Naive thymus-derived CD4-positive, alpha-beta T cell (primary cell): ENCODE measurements at regions of chr20 and their contacts with region 1.

Region 1: DNA sequence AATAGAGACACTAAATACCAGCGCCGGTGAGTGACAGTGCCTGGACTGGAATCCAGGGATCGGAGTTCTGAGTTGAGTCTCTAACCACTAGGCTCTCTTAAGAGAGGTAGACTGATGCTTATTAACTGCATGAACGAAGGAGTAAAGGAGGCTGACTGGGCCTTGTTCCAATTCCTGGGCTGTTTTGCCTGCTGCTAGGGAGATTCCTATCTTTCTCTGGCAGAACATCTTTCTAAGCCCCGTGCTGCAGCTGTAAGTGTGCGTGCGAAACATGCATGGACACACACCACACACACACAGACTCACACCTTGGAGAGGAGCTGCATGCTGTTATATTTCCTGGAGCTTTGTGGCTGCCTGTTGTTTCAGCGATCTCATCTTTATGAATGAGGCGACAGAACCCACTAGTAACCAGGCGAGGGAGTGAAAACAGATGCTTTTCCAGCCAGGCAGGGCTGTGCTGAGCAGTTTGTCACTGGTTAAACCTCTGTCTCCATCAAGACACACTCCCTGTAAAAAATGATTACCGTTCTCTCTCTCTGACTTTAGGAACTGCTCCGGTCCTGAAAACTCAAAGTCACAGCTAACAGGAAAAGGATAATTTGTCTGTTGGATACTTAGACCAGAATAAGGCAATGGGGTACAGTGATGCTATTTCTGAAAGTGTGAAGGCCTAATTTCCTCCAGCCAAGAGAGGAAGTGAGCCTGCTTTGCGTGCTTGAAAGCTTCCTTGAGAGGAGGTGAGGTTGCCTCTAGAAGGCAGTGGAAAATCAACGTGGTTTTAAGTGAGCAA is 157.4 kb upstream of the ZNF217 start:
- DNase-seq: peak in 8 of 9 donors; percentile 21 to 60 (median 40)
- ATAC-seq: peak; percentile 61
- H3K4me3 ChIP-seq: no peak overlapping the region
- H3K4me3 Mint-ChIP-seq: peak overlapping the region; percentile 51 to 84 (median 68)
- H3K27ac ChIP-seq: peak overlapping the region; percentile 63
- H3K27ac Mint-ChIP-seq: peak overlapping the region; percentile 91 to 99 (median 96)
- H3K4me1 ChIP-seq: peaks cover 53 to 66% of the 10 kb centered on the region in 2 donors
- H3K4me1 Mint-ChIP-seq: peaks cover 45 to 77% (median 72%) of the 10 kb centered on the region in 7 donors
- H3K27me3 ChIP-seq: no peaks in the 10 kb centered on the region
- H3K27me3 Mint-ChIP-seq: no peaks in the 10 kb centered on the region

Region 2: DNA sequence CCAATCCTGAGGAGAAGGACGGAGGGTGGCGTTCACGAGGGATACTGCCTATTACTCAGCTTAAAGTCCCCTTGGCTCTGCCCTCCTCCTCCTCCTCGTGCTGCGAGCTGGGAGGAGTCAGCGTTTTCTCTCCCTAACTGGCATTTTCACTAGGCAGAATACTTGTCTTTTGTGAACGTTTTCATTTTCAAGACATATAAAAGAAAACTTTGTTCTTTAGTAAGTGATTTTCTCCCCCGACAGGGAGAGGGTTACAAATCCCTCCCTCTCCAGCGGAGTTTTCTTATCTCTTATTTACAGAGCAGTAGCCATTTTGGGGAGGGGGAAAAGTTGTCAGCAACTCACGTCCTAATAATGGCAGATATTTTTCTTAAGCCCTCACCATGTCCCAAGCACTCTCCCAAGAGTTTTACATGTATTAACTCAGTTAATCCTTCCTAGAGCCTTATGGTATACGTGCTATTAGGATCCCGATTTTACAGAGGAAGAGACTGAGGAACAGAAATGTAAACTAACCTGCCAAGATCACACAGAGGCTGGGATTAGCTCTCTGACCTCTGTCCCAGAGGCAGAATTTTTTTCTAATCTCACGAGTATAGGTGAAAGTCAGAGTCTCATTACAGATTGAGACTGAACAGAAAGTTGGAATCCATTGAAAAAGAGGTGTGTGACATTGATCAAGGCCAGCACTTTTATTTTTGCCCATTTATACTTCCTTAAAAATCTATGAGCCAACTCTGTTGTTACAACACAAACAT is 127.4 kb before region 1 on chr20:
- CTCF ChIA-PET with region 1: no interaction called
- POLR2A ChIA-PET with region 1: interaction called, 3 read pairs
- intact Hi-C with region 1: loop called in 1 of 2 experiments (anchors 1 kb)
- DNase-seq: peak in 4 of 9 donors; percentile 28 to 44 (median 31)
- ATAC-seq: peak; percentile 83
- H3K4me3 ChIP-seq: peak overlapping the region; percentile 56
- H3K4me3 Mint-ChIP-seq: peak overlapping the region; percentile 78 to 92 (median 87)
- H3K27ac ChIP-seq: peak overlapping the region; percentile 74
- H3K27ac Mint-ChIP-seq: peak overlapping the region; percentile 91 to 98 (median 97)
- H3K4me1 ChIP-seq: peaks cover 31 to 32% of the 10 kb centered on the region in 2 donors
- H3K4me1 Mint-ChIP-seq: peaks cover 17 to 53% (median 44%) of the 10 kb centered on the region in 7 donors
- H3K27me3 ChIP-seq: no peaks in the 10 kb centered on the region
- H3K27me3 Mint-ChIP-seq: no peaks in the 10 kb centered on the region

Region 3: GRCh38 chr20:53652090-53652858 is 98.7 kb before region 1 on chr20:
- CTCF ChIA-PET with region 1: no interaction called
- POLR2A ChIA-PET with region 1: no interaction called
- intact Hi-C with region 1: no loop called
- DNase-seq: peak in 7 of 9 donors; percentile 34 to 61 (median 46)
- ATAC-seq: peak; percentile 85
- H3K4me3 ChIP-seq: peak overlapping the region; percentile 22
- H3K4me3 Mint-ChIP-seq: peak overlapping the region; percentile 25 to 86 (median 73)
- H3K27ac ChIP-seq: peak overlapping the region; percentile 72
- H3K27ac Mint-ChIP-seq: peak overlapping the region; percentile 88 to 97 (median 95)
- H3K4me1 ChIP-seq: peaks cover 21 to 32% of the 10 kb centered on the region in 2 donors
- H3K4me1 Mint-ChIP-seq: peaks cover 23 to 50% (median 43%) of the 10 kb centered on the region in 7 donors
- H3K27me3 ChIP-seq: no peaks in the 10 kb centered on the region
- H3K27me3 Mint-ChIP-seq: no peaks in the 10 kb centered on the region

Region 4: GRCh38 chr20:53692413-53693067 is 58.5 kb before region 1 on chr20:
- CTCF ChIA-PET with region 1: no interaction called
- POLR2A ChIA-PET with region 1: no interaction called
- intact Hi-C with region 1: loop called in 1 of 2 experiments (anchors 1 kb)
- DNase-seq: no peak
- ATAC-seq: peak; percentile 61
- H3K4me3 ChIP-seq: no peak overlapping the region
- H3K4me3 Mint-ChIP-seq: peak overlapping the region; percentile 42 to 80 (median 72)
- H3K27ac ChIP-seq: no peak overlapping the region
- H3K27ac Mint-ChIP-seq: peak overlapping the region; percentile 38 to 92 (median 69)
- H3K4me1 ChIP-seq: peaks cover 8 to 10% of the 10 kb centered on the region in 2 donors
- H3K4me1 Mint-ChIP-seq: peaks cover 8 to 45% (median 30%) of the 10 kb centered on the region in 7 donors
- H3K27me3 ChIP-seq: no peaks in the 10 kb centered on the region
- H3K27me3 Mint-ChIP-seq: no peaks in the 10 kb centered on the region

Region 5: DNA sequence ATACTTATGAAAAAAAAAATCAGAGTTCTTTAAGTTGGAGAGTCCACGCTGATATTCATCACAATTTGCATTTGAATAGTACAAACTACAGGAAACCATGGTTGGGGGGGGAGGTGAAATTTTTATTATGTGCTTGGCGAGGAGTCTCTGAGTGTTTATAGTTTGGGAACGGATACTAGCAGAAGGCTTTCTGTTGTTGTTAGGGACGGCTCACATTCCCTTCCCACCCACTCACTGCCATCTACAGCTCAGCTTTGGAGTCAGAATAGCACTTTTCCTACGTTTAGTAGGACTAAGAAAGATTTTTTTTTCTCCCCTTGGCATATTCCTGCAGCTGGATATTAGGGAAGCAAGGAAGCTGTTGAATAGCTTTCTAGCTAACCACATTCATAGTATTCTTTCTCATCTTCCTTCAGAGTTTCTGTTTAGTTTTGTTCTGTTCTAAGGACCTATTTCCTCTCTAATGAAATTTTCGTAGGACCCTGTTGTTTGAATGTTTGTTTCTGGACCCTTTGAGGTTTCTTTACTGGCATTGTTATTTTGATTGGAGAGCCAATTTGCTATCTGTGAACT is 77.7 kb after region 1 on chr20:
- CTCF ChIA-PET with region 1: no interaction called
- POLR2A ChIA-PET with region 1: interaction called, 3 read pairs
- intact Hi-C with region 1: loop called in 1 of 2 experiments (anchors 5 kb)
- DNase-seq: no peak
- ATAC-seq: no peak
- H3K4me3 ChIP-seq: peak overlapping the region; percentile 52
- H3K4me3 Mint-ChIP-seq: peak overlapping the region; percentile 77 to 96 (median 88)
- H3K27ac ChIP-seq: peak overlapping the region; percentile 59
- H3K27ac Mint-ChIP-seq: peak overlapping the region; percentile 86 to 98 (median 94)
- H3K4me1 ChIP-seq: peaks cover 16 to 26% of the 10 kb centered on the region in 2 donors
- H3K4me1 Mint-ChIP-seq: peaks cover 24 to 62% (median 50%) of the 10 kb centered on the region in 7 donors
- H3K27me3 ChIP-seq: no peaks in the 10 kb centered on the region
- H3K27me3 Mint-ChIP-seq: no peaks in the 10 kb centered on the region

Region 6: GRCh38 chr20:53847129-53847836 is 96.3 kb after region 1 on chr20:
- CTCF ChIA-PET with region 1: interaction called, 3 read pairs
- POLR2A ChIA-PET with region 1: interaction called, 6 read pairs
- intact Hi-C with region 1: loop called in 1 of 2 experiments (anchors 5 kb)
- DNase-seq: peak in 5 of 9 donors; percentile 31 to 57 (median 47)
- ATAC-seq: peak; percentile 72
- H3K4me3 ChIP-seq: no peak overlapping the region
- H3K4me3 Mint-ChIP-seq: peak overlapping the region; percentile 58 to 89 (median 78)
- H3K27ac ChIP-seq: peak overlapping the region; percentile 1
- H3K27ac Mint-ChIP-seq: peak overlapping the region; percentile 58 to 94 (median 88)
- H3K4me1 ChIP-seq: peaks cover 47 to 61% of the 10 kb centered on the region in 2 donors
- H3K4me1 Mint-ChIP-seq: peaks cover 43 to 77% (median 58%) of the 10 kb centered on the region in 7 donors
- H3K27me3 ChIP-seq: no peaks in the 10 kb centered on the region
- H3K27me3 Mint-ChIP-seq: no peaks in the 10 kb centered on the region

Region 7: GRCh38 chr20:53939572-53940359 is 188.7 kb after region 1 on chr20:
- CTCF ChIA-PET with region 1: no interaction called
- POLR2A ChIA-PET with region 1: no interaction called
- intact Hi-C with region 1: loop called (anchors 5 to 10 kb)
- DNase-seq: peak; percentile 35 to 62 (median 48)
- ATAC-seq: peak; percentile 82
- H3K4me3 ChIP-seq: no peak overlapping the region
- H3K4me3 Mint-ChIP-seq: peak overlapping the region in 3 of 10 donors; percentile 24 to 44 (median 30)
- H3K27ac ChIP-seq: no peak overlapping the region
- H3K27ac Mint-ChIP-seq: peak overlapping the region in 6 of 9 donors; percentile 2 to 79 (median 22)
- H3K4me1 ChIP-seq: peaks cover 15 to 24% of the 10 kb centered on the region in 2 donors
- H3K4me1 Mint-ChIP-seq: peaks cover 26 to 62% (median 44%) of the 10 kb centered on the region in 7 donors
- H3K27me3 ChIP-seq: no peaks in the 10 kb centered on the region
- H3K27me3 Mint-ChIP-seq: no peaks in the 10 kb centered on the region